GM12878 (cell line): ENCODE measurements at regions of chr11 and their contacts with region 1.

Region 1: GRCh38 chr11:23112987-23113886 is 253.0 kb upstream of the CCDC179 start:
- DNase-seq: no peak
- ATAC-seq: peak; percentile 83
- H3K4me3 ChIP-seq: no peak overlapping the region
- H3K27ac ChIP-seq: no peak overlapping the region
- H3K4me1 ChIP-seq: no peaks in the 10 kb centered on the region
- H3K27me3 ChIP-seq: no peaks in the 10 kb centered on the region
- CTCF ChIP-seq: peak; percentile 48 to 74 (median 50); a peak in 5 of 6 replicates
- EP300 ChIP-seq: no peak
- POLR2A ChIP-seq: no peak
- RAD21 ChIP-seq: peak; percentile 54

Region 2: GRCh38 chr11:22875869-22876473 is 237.3 kb before region 1 on chr11:
- CTCF ChIA-PET with region 1: interaction called, 23 read pairs
- POLR2A ChIA-PET with region 1: no interaction called
- RAD21 ChIA-PET with region 1: interaction called, 11 read pairs
- SMC1A ChIA-PET with region 1: interaction called, 24 read pairs
- in situ Hi-C with region 1: no loop called
- intact Hi-C with region 1: loop called (anchors 5 kb)
- DNase-seq: peak; percentile 38
- ATAC-seq: peak; percentile 100
- H3K4me3 ChIP-seq: no peak overlapping the region
- H3K27ac ChIP-seq: no peak overlapping the region
- H3K4me1 ChIP-seq: no peaks in the 10 kb centered on the region
- H3K27me3 ChIP-seq: no peaks in the 10 kb centered on the region
- CTCF ChIP-seq: peak; percentile 54 to 89 (median 68)
- EP300 ChIP-seq: no peak
- POLR2A ChIP-seq: no peak
- RAD21 ChIP-seq: peak; percentile 83

Region 3: DNA sequence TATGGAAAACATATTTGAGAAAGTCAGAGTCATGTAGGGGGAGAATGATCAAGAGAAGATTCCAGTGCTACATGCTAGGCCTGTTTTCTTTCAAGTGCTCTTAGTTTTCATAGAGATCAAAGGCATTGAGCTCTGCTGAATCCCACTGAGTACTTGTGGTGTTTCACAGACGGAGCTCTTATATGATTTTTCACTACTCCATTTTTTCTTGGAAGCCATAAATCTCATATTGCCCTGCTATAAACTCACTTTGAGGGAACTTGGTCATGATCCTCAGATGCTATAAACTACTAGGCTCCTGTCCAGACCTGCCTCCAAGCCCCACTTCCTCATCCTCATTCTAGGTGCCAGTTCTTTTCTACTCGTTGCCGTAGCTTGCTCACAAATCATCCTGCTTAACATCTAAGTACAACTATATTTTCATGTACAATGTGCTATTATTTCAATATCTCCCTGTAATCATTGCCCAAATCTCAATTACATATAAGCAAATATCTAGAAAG is 72.2 kb before region 1 on chr11:
- CTCF ChIA-PET with region 1: interaction called, 17 read pairs
- POLR2A ChIA-PET with region 1: no interaction called
- RAD21 ChIA-PET with region 1: interaction called, 7 read pairs
- SMC1A ChIA-PET with region 1: interaction called, 18 read pairs
- in situ Hi-C with region 1: no loop called
- intact Hi-C with region 1: no loop called
- DNase-seq: no peak
- ATAC-seq: no peak
- H3K4me3 ChIP-seq: no peak overlapping the region
- H3K27ac ChIP-seq: no peak overlapping the region
- H3K4me1 ChIP-seq: no peaks in the 10 kb centered on the region
- H3K27me3 ChIP-seq: no peaks in the 10 kb centered on the region
- CTCF ChIP-seq: no peak
- EP300 ChIP-seq: no peak
- POLR2A ChIP-seq: no peak
- RAD21 ChIP-seq: no peak

Region 4: GRCh38 chr11:23078289-23078971 is 34.8 kb before region 1 on chr11:
- CTCF ChIA-PET with region 1: interaction called, 17 read pairs
- POLR2A ChIA-PET with region 1: interaction called, 5 read pairs
- RAD21 ChIA-PET with region 1: interaction called, 44 read pairs
- SMC1A ChIA-PET with region 1: interaction called, 14 read pairs
- in situ Hi-C with region 1: no loop called
- intact Hi-C with region 1: no loop called
- DNase-seq: no peak
- ATAC-seq: peak; percentile 90
- H3K4me3 ChIP-seq: no peak overlapping the region
- H3K27ac ChIP-seq: no peak overlapping the region
- H3K4me1 ChIP-seq: no peaks in the 10 kb centered on the region
- H3K27me3 ChIP-seq: no peaks in the 10 kb centered on the region
- CTCF ChIP-seq: no peak
- EP300 ChIP-seq: peak; percentile 21 to 67; a peak in 1 of 4 replicates
- POLR2A ChIP-seq: no peak
- RAD21 ChIP-seq: no peak

Region 5: DNA sequence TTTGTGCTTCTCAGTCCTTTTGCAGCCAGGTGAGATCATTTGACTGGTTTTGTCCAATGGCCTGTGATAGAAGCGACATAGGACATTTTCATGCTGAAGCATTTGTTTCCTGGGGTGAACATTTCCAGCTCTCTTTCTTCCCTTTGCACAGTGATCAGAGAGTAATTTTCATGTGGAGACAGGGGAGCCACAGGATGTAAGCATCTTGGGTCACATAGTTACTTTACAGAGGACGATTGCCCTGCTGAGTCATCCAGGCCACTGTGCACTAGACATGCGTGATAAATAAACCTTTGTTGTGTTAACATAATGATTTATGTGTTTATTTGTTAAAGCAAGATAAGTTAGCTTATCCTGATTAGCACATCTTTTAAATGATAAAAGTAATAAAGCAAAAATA is 10.5 kb after region 1 on chr11:
- CTCF ChIA-PET with region 1: interaction called, 12 read pairs
- POLR2A ChIA-PET with region 1: no interaction called
- RAD21 ChIA-PET with region 1: interaction called, 4 read pairs
- SMC1A ChIA-PET with region 1: interaction called, 12 read pairs
- in situ Hi-C with region 1: no loop called
- intact Hi-C with region 1: no loop called
- DNase-seq: no peak
- ATAC-seq: no peak
- H3K4me3 ChIP-seq: no peak overlapping the region
- H3K27ac ChIP-seq: no peak overlapping the region
- H3K4me1 ChIP-seq: no peaks in the 10 kb centered on the region
- H3K27me3 ChIP-seq: no peaks in the 10 kb centered on the region
- CTCF ChIP-seq: no peak
- EP300 ChIP-seq: no peak
- POLR2A ChIP-seq: no peak
- RAD21 ChIP-seq: no peak

Region 6: GRCh38 chr11:23540101-23540561 is 426.9 kb after region 1 on chr11:
- CTCF ChIA-PET with region 1: interaction called, 31 read pairs
- POLR2A ChIA-PET with region 1: no interaction called
- RAD21 ChIA-PET with region 1: interaction called, 16 read pairs
- SMC1A ChIA-PET with region 1: interaction called, 24 read pairs
- in situ Hi-C with region 1: no loop called
- intact Hi-C with region 1: loop called (anchors 5 kb)
- DNase-seq: peak; percentile 5
- ATAC-seq: peak; percentile 96
- H3K4me3 ChIP-seq: no peak overlapping the region
- H3K27ac ChIP-seq: no peak overlapping the region
- H3K4me1 ChIP-seq: no peaks in the 10 kb centered on the region
- H3K27me3 ChIP-seq: no peaks in the 10 kb centered on the region
- CTCF ChIP-seq: peak; percentile 68 to 77 (median 72)
- EP300 ChIP-seq: no peak
- POLR2A ChIP-seq: no peak
- RAD21 ChIP-seq: peak; percentile 70